MCF 10A (cell line): ENCODE measurements at regions of chr10 and their contacts with region 1.

Region 1: GRCh38 chr10:97210543-97210961 is 24.8 kb upstream of the SLIT1 start:
- DNase-seq: peak; percentile 79
- H3K4me3 Mint-ChIP-seq: no peak overlapping the region
- H3K27ac Mint-ChIP-seq: no peak overlapping the region
- H3K4me1 Mint-ChIP-seq: no peaks in the 10 kb centered on the region
- H3K27me3 Mint-ChIP-seq: peaks cover 30% of the 10 kb centered on the region
- CTCF ChIP-seq: peak; percentile 92

Region 2: DNA sequence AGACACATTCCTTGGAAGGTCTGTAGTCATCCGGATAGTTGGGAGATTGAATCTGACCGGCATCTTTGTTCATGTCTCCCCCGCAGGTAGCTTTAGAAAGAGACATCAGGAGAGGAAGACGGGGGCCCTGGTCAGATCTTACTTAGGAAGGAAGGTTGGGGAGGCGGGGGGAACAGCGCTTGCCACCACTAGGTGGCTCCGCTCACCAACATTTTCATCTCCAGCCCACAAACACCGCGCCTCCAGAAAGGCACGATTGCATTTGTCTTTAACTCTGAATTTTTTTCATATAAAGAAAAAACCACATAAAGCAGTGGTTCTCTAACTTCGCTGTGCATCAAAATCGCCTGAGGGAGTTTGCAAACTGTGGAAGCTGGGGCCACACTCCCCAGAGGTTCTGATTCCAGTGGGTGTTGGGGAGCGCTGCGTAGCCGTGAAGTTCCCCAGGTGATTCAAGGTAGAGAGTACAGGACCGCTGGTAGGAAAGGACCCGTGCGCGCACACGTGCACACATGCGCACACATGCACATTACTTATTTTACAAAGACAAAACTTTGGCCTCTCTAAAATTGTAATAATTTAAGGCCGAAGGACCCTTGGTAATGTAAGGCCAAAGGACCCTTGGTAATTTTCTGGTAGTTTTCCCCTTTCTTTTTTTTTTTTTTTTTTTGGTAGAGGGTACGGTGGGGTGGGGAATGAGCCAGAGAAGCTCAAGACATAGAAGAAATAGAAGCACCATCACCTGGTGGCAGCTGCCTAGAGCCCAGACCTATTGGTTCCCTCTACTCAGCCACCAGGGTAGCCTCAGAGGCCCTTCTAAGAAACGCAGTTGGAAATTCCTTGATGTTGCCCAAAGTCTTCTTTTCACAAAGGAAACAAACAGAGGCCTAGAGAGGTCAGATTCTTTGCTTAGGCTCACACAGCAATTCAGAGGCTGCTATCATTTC is 814.3 kb before region 1 on chr10:
- CTCF ChIA-PET with region 1: interaction called, 4 read pairs
- POLR2A ChIA-PET with region 1: no interaction called
- intact Hi-C with region 1: loop called (anchors 10 kb)
- DNase-seq: peak; percentile 65
- H3K4me3 Mint-ChIP-seq: no peak overlapping the region
- H3K27ac Mint-ChIP-seq: no peak overlapping the region
- H3K4me1 Mint-ChIP-seq: no peaks in the 10 kb centered on the region
- H3K27me3 Mint-ChIP-seq: peaks cover 71% of the 10 kb centered on the region
- CTCF ChIP-seq: peak; percentile 76

Region 3: GRCh38 chr10:97037365-97038361 is 172.9 kb before region 1 on chr10:
- CTCF ChIA-PET with region 1: interaction called, 111 read pairs
- POLR2A ChIA-PET with region 1: interaction called, 3 read pairs
- intact Hi-C with region 1: loop called (anchors 1 kb)
- DNase-seq: peak; percentile 89
- H3K4me3 Mint-ChIP-seq: peak overlapping the region; percentile 50
- H3K27ac Mint-ChIP-seq: no peak overlapping the region
- H3K4me1 Mint-ChIP-seq: peaks cover 9% of the 10 kb centered on the region
- H3K27me3 Mint-ChIP-seq: peaks cover 20% of the 10 kb centered on the region
- CTCF ChIP-seq: peak; percentile 83

Region 4: GRCh38 chr10:97081621-97082235 is 128.8 kb before region 1 on chr10:
- CTCF ChIA-PET with region 1: interaction called, 32 read pairs
- POLR2A ChIA-PET with region 1: no interaction called
- intact Hi-C with region 1: no loop called
- DNase-seq: peak; percentile 73
- H3K4me3 Mint-ChIP-seq: no peak overlapping the region
- H3K27ac Mint-ChIP-seq: no peak overlapping the region
- H3K4me1 Mint-ChIP-seq: no peaks in the 10 kb centered on the region
- H3K27me3 Mint-ChIP-seq: peaks cover 70% of the 10 kb centered on the region
- CTCF ChIP-seq: peak; percentile 70

Region 5: GRCh38 chr10:97176226-97176625 is 34.3 kb before region 1 on chr10:
- CTCF ChIA-PET with region 1: interaction called, 19 read pairs
- POLR2A ChIA-PET with region 1: no interaction called
- intact Hi-C with region 1: no loop called
- DNase-seq: no peak
- H3K4me3 Mint-ChIP-seq: no peak overlapping the region
- H3K27ac Mint-ChIP-seq: no peak overlapping the region
- H3K4me1 Mint-ChIP-seq: no peaks in the 10 kb centered on the region
- H3K27me3 Mint-ChIP-seq: peaks cover 12% of the 10 kb centered on the region
- CTCF ChIP-seq: no peak

Region 6: GRCh38 chr10:97234400-97234799 is 23.8 kb after region 1 on chr10:
- CTCF ChIA-PET with region 1: interaction called, 34 read pairs
- POLR2A ChIA-PET with region 1: no interaction called
- intact Hi-C with region 1: no loop called
- DNase-seq: peak; percentile 47
- H3K4me3 Mint-ChIP-seq: no peak overlapping the region
- H3K27ac Mint-ChIP-seq: no peak overlapping the region
- H3K4me1 Mint-ChIP-seq: no peaks in the 10 kb centered on the region
- H3K27me3 Mint-ChIP-seq: no peaks in the 10 kb centered on the region
- CTCF ChIP-seq: peak; percentile 57